Kidney (tissue), 22 donors: ENCODE measurements at regions of chr2 and their contacts with region 1.

Region 1: DNA sequence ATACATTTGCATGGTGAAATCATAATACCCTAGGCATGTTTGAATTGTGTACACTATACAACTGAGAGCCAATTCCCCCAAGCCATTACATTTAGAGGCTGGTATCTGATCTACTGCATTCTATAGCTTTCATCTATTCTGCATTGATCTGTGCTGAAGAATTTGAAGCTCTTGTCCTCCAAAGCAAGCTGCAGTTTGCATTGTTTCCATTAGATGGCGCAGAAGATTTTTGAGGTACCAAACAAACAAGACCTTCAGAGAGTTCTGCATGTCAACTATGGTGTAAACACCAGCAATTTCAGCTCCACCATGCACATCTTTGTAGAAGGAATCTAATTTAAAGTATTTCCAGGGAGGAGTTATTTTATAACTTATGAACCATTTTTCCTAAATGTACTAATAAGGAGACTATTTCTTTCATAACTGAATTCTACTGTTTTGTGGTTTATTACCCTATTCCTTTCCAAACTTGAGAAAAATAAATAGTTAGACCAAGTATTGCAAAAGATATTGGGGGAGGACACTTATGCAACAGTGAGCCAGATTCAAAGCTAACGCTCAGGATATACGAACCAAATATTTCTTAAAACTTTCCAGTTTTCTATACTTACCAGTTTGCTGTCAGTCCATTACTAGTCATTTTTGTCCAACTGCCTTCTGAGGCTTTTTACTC is 761.8 kb upstream of the ACVR2A start:
- DNase-seq: peak in 4 of 5 donors; percentile 39 to 87 (median 74)
- H3K4me3 ChIP-seq: no peak overlapping the region
- H3K27ac ChIP-seq: no peak overlapping the region
- H3K4me1 ChIP-seq: no peaks in the 10 kb centered on the region
- H3K27me3 ChIP-seq: no peaks in the 10 kb centered on the region
- CTCF ChIP-seq: peak; percentile 83

Region 2: GRCh38 chr2:147910990-147911473 is 828.0 kb after region 1 on chr2:
- intact Hi-C with region 1: loop called (anchors 10 kb)
- DNase-seq: peak in 3 of 5 donors; percentile 30 to 84 (median 80)
- H3K4me3 ChIP-seq: no peak overlapping the region
- H3K27ac ChIP-seq: no peak overlapping the region
- H3K4me1 ChIP-seq: peaks cover 0 to 4% (median 0%) of the 10 kb centered on the region in 3 donors
- H3K27me3 ChIP-seq: no peaks in the 10 kb centered on the region
- CTCF ChIP-seq: peak; percentile 85